CD14-positive monocyte (primary cell): ENCODE measurements at regions of chr10 and their contacts with region 1.

Region 1: GRCh38 chr10:44932517-44933450 is 21.6 kb downstream of the TMEM72 start:
- DNase-seq: peak; percentile 74 to 81 (median 79)
- H3K4me3 ChIP-seq: no peak overlapping the region
- H3K4me3 Mint-ChIP-seq: no peak overlapping the region
- H3K27ac ChIP-seq: no peak overlapping the region
- H3K27ac Mint-ChIP-seq: peak overlapping the region in 2 of 7 donors; percentile 60 to 64
- H3K4me1 ChIP-seq: peaks cover 54 to 58% of the 10 kb centered on the region in 2 donors
- H3K4me1 Mint-ChIP-seq: peaks cover 51% of the 10 kb centered on the region
- H3K27me3 ChIP-seq: no peaks in the 10 kb centered on the region
- H3K27me3 Mint-ChIP-seq: peaks cover 0 to 5% (median 0%) of the 10 kb centered on the region in 3 donors
- CTCF ChIP-seq: peak; percentile 97

Region 2: GRCh38 chr10:44947371-44948152 is 14.8 kb after region 1 on chr10:
- intact Hi-C with region 1: loop called in 1 of 2 experiments (anchors 1 kb)
- DNase-seq: peak; percentile 77 to 96 (median 83)
- H3K4me3 ChIP-seq: peak overlapping the region in 1 of 3 experiments; percentile 38
- H3K4me3 Mint-ChIP-seq: peak overlapping the region in 1 of 2 donors; percentile 69
- H3K27ac ChIP-seq: peak overlapping the region; percentile 66 to 76
- H3K27ac Mint-ChIP-seq: peak overlapping the region; percentile 69 to 93 (median 89)
- H3K4me1 ChIP-seq: peaks cover 52 to 59% of the 10 kb centered on the region in 2 donors
- H3K4me1 Mint-ChIP-seq: peaks cover 60% of the 10 kb centered on the region
- H3K27me3 ChIP-seq: no peaks in the 10 kb centered on the region
- H3K27me3 Mint-ChIP-seq: peaks cover 0 to 4% (median 0%) of the 10 kb centered on the region in 3 donors
- CTCF ChIP-seq: no peak

Region 3: GRCh38 chr10:44974628-44975431 is 42.0 kb after region 1 on chr10:
- intact Hi-C with region 1: loop called (anchors 1 to 2 kb)
- DNase-seq: peak; percentile 35 to 68 (median 66)
- H3K4me3 ChIP-seq: peak overlapping the region in 2 of 3 experiments; percentile 22 to 63
- H3K4me3 Mint-ChIP-seq: peak overlapping the region; percentile 64 to 72
- H3K27ac ChIP-seq: peak overlapping the region; percentile 73 to 81
- H3K27ac Mint-ChIP-seq: peak overlapping the region; percentile 80 to 92 (median 91)
- H3K4me1 ChIP-seq: peaks cover 56 to 74% of the 10 kb centered on the region in 2 donors
- H3K4me1 Mint-ChIP-seq: peaks cover 68% of the 10 kb centered on the region
- H3K27me3 ChIP-seq: no peaks in the 10 kb centered on the region
- H3K27me3 Mint-ChIP-seq: no peaks in the 10 kb centered on the region
- CTCF ChIP-seq: peak; percentile 99